GM10248 (cell line): ENCODE measurements at regions of chr6 and their contacts with region 1.

Region 1: DNA sequence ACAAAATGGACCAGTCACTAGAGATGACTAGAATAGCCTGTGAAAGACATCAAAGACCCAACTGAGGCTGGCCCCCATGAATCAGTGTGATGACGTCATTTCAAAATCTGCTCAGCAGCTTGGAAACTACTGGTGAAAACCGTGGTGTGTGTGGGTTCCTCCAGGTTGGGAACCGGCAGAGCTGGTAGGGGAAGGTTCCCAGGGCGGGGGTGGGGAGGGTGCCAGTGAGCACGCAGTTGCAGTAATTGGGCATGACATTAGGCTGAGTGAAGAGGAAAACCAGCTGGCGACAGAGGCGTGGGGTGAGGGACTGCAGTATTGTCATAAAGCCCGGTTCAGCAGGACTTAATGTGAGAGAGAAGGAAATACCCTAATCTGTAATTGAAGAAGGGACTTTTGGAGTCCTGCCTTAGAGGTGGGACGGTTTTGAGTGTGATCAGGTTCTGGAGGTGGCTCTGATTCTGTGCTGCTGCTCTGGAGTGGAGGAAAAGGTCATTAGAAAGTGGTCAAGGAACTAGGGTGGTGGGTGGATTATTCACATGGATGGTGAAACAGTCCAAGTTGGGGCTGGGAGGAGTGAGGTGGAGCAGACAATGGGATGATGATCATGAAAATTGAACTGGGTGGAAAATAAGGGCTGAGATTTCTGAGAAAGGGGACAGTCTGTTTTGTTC is 52.0 kb upstream of the MTHFD1L start:
- DNase-seq: peak; percentile 62
- CTCF ChIP-seq: no peak

Region 2: GRCh38 chr6:150079604-150080003 is 733.9 kb before region 1 on chr6:
- CTCF ChIA-PET with region 1: interaction called, 52 read pairs
- POLR2A ChIA-PET with region 1: no interaction called
- DNase-seq: no peak
- CTCF ChIP-seq: no peak

Region 3: DNA sequence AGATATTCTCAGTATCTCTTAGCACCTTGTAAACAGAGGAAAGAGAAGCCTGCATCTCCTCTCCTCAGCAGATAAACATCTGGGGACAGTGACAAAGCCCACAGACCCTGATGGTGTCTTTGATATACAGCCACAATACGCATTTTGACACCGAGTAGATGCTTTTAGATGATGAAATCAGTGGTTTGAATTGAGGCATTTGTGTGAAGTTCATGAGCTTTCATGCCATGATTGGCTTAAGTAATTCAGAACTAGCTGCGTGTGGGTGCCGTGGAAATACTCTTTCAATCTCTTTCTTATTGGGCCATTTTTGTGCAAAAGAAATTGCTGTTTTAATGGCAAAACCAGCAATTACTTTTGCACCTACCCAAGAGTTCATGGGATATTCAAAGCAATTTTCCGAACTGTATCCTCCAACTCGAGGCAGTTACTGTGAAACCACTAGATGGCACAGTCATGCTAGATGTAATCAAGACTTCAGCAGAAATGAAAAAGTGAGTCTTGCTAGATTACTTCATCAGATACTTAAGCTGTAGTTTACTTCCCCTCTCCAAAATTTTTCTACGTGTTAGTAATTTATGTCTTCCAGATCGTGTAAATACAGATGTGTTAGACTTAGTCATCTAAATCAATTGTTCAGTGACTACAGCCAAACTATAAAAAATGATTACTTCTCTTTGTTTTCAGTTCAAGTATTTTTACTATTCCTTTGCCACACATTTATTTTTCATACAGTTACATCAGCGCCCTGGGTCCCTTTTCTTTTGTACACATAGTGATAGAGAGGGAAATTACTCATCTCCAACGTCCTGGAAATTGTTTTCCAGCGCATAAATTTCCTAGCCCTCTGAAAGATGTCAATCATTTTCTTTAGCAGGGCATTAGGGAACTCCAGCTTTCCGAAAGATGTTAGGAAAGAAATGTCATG is 395.3 kb before region 1 on chr6:
- CTCF ChIA-PET with region 1: interaction called, 79 read pairs
- POLR2A ChIA-PET with region 1: no interaction called
- DNase-seq: peak; percentile 72
- CTCF ChIP-seq: peak; percentile 83

Region 4: GRCh38 chr6:150767571-150768018 is 45.9 kb before region 1 on chr6:
- CTCF ChIA-PET with region 1: interaction called, 11 read pairs
- POLR2A ChIA-PET with region 1: no interaction called
- DNase-seq: no peak
- CTCF ChIP-seq: no peak

Region 5: GRCh38 chr6:150831577-150831976 is 18.1 kb after region 1 on chr6:
- CTCF ChIA-PET with region 1: interaction called, 32 read pairs
- POLR2A ChIA-PET with region 1: no interaction called
- DNase-seq: no peak
- CTCF ChIP-seq: no peak

Region 6: DNA sequence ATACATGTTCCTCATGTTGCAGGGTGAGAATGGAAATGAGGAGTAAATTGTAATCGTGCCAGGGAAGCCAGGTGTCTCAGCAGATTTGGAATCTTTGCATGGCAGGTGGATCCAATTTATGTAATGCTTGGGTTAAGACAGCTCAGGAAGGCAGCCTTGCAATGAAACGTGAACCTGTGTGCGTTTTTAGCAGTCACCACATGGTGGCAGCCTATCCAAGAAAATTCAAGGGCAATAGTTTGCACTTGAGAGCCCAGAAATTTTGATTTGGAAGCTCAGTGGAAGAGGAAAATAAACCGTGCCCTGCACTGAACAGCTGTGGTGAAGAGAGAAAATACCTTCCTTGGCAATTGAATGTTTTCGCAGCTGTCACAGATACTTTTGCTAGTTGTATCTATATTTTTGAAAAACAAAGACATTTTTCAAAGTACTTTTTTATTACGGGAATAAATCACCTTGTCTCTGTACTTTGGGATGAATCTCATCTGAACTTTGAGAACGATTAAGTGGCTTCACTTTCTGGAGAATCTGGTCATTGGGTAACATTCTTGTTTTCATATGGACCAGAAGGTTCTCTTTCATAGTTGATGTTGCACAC is 78.5 kb after region 1 on chr6:
- CTCF ChIA-PET with region 1: interaction called, 17 read pairs
- POLR2A ChIA-PET with region 1: no interaction called
- DNase-seq: peak; percentile 45
- CTCF ChIP-seq: peak; percentile 82

Region 7: DNA sequence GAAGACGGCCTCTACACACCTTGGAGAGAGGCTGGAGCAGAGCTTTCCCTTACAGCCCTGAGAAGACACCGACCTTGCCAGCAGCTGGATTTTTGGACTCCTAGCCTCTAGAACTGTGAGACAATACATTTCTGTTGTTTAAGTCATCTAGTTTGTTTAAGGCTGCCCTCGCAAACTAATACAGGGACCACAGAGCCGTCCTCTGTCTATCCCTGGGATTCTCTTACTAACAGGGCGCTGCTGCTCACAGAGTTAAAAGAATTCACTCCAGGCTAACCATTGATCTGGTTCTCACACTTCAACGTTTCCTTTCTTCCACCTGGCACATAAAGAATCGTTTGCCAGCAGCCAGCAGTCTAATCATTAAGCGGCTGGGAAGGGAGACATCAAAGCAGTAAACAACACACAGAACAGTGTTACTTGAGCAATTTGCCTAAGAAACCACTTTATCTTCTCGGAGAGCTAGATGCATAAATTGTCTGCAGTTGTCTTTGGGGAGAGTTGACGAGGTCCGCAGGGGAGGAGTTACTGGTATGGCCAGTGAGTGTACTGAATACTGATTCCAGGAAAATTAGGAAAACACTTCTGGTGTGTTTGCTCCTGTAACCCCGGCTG is 322.8 kb after region 1 on chr6:
- CTCF ChIA-PET with region 1: no interaction called
- POLR2A ChIA-PET with region 1: no interaction called
- DNase-seq: no peak
- CTCF ChIP-seq: no peak